Activated T-helper 1 cell treated with anti-CD3 and anti-CD28 coated beads, Interleukin-12 subunit alpha, Interleukin-12 subunit beta, Interleukin-2, Interleukin-4 antibody, amounts not matched to agents 30 ng/mL and 10 ng/mL and 1 ng/mL, durations not matched to agents 14 hours and 24 hours and 36 hours (primary cell): ENCODE measurements at regions of chr19 and their contacts with region 1.

Region 1: DNA sequence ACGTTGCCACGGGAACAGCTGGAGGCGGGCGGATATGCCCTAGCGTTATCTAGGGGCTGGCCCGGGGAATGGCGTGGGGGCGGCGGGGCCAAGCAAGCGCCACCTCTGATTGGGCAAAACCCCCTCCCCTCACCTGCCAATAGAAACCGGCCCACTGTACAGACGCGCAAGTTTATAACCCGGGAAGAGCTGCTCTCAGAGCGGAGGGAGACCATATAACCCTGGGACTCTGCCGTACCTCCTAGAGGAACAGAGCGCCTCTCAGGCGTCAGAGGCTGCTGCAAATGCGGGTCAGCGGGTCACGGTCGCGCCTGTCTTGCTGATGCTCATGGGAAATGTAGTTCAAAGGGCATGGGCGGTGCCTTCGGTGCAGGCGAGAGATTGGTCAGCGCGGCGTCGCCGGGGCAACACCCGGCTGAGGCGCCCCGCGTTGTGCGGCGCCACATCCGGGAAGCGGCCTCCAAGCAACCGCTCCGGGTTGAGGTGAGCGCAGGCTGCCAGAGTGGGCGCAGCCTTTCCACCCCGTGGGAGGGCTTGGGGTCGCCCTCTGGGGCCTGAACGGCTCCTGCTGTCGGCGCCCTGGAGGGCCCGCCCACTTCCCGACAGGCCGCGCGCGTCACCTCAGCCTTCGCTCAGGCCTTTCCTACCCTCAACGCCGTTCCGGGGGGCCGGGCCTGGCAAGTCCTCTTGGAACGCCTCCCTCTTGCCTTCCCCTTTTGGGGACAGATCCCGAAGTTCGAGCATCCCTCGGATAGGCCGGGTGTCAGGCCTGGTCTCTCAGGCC is at the start of gene ZNF446:
- DNase-seq: peak; percentile 95
- H3K4me3 Mint-ChIP-seq: peak within 1 kb of the TSS; percentile 88
- H3K27ac Mint-ChIP-seq: peak within 1 kb of the TSS; percentile 99
- H3K4me1 Mint-ChIP-seq: peaks cover 25% of the 10 kb centered on the region
- H3K27me3 Mint-ChIP-seq: no peaks in the 10 kb centered on the region
- total RNA-seq, gene ZNF446: 6.6 and 6.7 TPM in 2 replicates

Region 2: GRCh38 chr19:58451358-58452101 is 24.4 kb before region 1 on chr19 and contains the start of gene ZNF324B:
- intact Hi-C with region 1: loop called (anchors 1 kb)
- DNase-seq: peak; percentile 95
- H3K4me3 Mint-ChIP-seq: peak within 1 kb of the TSS; percentile 85
- H3K27ac Mint-ChIP-seq: peak within 1 kb of the TSS; percentile 48
- H3K4me1 Mint-ChIP-seq: peaks cover 18% of the 10 kb centered on the region
- H3K27me3 Mint-ChIP-seq: peaks cover 7% of the 10 kb centered on the region
- total RNA-seq, gene ZNF324B: 14.3 and 15.1 TPM in 2 replicates

Region 3: DNA sequence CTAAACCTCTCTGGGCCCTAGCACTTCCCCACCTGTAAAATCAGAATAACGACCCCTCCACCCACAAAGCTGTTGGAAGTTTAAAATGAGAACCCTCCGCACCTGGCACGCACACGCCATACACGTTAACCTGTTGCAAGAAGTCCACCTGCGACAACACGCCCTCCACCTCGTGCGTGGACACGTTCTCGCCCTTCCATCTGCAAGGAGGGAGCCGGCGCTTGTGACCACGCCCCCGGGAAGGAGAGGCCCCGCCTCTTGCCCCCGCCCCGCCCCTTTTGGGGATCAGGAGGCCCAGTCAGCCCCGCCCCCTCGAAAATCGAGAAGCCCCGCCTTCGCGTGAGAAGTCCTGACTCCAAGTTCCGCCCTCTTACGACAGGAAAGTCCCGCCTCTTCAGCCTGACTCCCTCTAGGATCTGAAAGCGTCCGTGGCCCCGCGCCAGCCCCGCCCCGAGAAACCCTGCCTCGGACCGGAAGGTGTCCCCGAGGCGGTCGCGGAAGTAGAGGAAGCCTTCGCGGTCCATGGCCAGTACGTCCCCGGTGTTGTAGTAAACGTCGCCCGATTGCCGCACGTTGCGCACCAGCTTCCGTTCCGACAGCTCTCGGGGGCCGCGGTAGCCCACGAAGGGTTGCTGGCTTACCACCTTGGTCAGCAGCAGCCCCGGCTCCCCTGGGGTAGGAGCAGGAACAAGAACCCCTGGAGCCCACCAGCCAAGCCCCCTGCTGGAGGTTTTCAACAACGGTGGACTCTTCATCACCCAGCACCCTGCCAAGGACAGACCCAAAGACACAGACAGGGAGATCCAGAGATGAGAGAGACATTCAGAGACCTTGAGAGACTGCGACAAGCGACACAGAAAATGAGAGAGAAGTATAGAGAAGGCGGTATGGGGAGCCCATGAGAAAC is 23.4 kb after region 1 on chr19:
- intact Hi-C with region 1: loop called (anchors 1 kb)
- DNase-seq: peak; percentile 96
- H3K4me3 Mint-ChIP-seq: peak overlapping the region; percentile 91
- H3K27ac Mint-ChIP-seq: peak overlapping the region; percentile 91
- H3K4me1 Mint-ChIP-seq: peaks cover 21% of the 10 kb centered on the region
- H3K27me3 Mint-ChIP-seq: peaks cover 7% of the 10 kb centered on the region

Region 4: DNA sequence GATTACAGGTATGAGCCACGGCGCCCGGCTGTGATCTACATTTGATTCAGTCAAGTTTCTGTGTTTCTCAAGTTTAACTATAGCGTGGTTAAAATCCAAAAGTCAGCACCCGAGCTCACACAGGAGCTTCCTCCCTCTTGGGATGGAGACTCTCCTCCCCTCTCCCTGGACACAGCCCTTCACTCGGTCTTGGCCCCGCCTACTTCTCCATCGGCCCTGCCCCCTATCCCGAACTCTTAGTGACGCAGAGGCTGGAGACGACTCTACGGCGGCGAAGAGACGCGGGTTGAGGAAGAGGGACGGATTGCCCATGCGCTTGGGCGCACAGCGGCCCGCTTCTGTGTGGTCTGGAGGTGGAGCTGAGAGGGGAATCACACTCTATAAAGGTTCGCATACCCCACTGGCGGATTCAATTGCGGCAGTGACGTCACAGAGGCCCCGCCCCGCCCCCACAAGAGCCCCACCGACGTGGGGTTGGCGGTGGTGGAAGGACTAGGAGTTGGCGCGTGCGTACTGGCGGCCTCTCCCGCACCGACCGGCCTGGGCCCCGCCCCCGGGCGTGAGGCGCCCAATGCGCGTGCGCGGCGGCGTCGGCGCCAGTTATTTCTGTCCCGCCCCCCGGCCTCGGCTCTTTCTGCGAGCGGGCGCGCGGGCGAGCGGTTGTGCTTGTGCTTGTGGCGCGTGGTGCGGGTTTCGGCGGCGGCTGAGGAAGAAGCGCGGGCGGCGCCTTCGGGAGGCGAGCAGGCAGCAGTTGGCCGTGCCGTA is 68.1 kb after region 1 on chr19 and contains the start of gene TRIM28:
- intact Hi-C with region 1: loop called (anchors 1 kb)
- DNase-seq: peak; percentile 100
- H3K4me3 Mint-ChIP-seq: peak within 1 kb of the TSS; percentile 94
- H3K27ac Mint-ChIP-seq: peak within 1 kb of the TSS; percentile 96
- H3K4me1 Mint-ChIP-seq: peaks cover 23% of the 10 kb centered on the region
- H3K27me3 Mint-ChIP-seq: peaks cover 6% of the 10 kb centered on the region
- total RNA-seq, gene TRIM28: 664 and 687 TPM in 2 replicates

Region 5: DNA sequence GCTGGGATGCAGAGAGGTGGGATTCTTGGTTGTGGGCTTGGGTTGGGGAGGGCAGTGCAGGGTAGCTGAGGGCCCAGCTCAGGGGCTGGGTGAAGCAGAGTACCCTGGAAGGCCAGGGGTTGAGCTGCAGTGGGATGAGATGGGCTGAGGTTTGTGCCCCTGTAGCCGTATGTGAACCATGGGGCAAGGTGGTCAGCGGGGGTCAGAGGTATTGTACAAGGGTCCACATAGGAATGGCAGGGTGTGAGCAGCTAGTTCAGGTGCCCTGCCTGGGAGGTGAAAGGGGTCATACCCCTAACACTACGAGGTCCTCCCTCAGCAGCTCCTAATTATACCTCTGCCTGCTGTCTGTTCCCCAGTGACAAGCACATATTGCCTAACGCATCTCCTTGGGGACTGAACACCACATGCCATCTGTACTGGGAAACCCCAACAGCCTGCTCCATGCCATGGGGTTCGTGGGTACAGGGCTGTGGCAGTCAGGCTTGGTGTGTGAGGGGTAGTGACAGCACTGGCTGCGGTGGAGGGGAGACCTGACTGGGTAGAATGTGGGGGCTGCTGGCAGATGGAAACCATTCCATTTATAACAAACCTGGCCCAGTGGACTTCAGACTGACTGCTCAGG is 93.9 kb after region 1 on chr19:
- intact Hi-C with region 1: no loop called
- DNase-seq: no peak
- H3K4me3 Mint-ChIP-seq: no peak overlapping the region
- H3K27ac Mint-ChIP-seq: no peak overlapping the region
- H3K4me1 Mint-ChIP-seq: peaks cover 36% of the 10 kb centered on the region
- H3K27me3 Mint-ChIP-seq: no peaks in the 10 kb centered on the region